Activated CD8-positive, alpha-beta T cell treated with anti-CD3 and anti-CD28 coated beads, Interleukin-2, amount 10 ng/mL, durations not matched to agents 7 days and 5 days (primary cell): ENCODE measurements at regions of chr5 and their contacts with region 1.

Region 1: GRCh38 chr5:141960449-141961202 is 2.6 kb upstream of the PCDH12 start:
- DNase-seq: peak; percentile 96
- ATAC-seq: peak; percentile 92
- H3K4me3 Mint-ChIP-seq: peak overlapping the region; percentile 40
- H3K27ac Mint-ChIP-seq: peak overlapping the region; percentile 86
- H3K4me1 Mint-ChIP-seq: peaks cover 58% of the 10 kb centered on the region
- H3K27me3 Mint-ChIP-seq: no peaks in the 10 kb centered on the region

Region 2: GRCh38 chr5:141664732-141665461 is 295.7 kb before region 1 on chr5:
- CTCF ChIA-PET with region 1: interaction called, 49 read pairs
- POLR2A ChIA-PET with region 1: no interaction called
- DNase-seq: peak; percentile 84
- ATAC-seq: peak; percentile 93
- H3K4me3 Mint-ChIP-seq: no peak overlapping the region
- H3K27ac Mint-ChIP-seq: peak overlapping the region; percentile 0
- H3K4me1 Mint-ChIP-seq: peaks cover 8% of the 10 kb centered on the region
- H3K27me3 Mint-ChIP-seq: no peaks in the 10 kb centered on the region

Region 3: GRCh38 chr5:141701360-141702119 is 259.1 kb before region 1 on chr5:
- CTCF ChIA-PET with region 1: interaction called, 224 read pairs
- POLR2A ChIA-PET with region 1: interaction called, 6 read pairs
- DNase-seq: no peak
- ATAC-seq: peak; percentile 25
- H3K4me3 Mint-ChIP-seq: peak overlapping the region; percentile 71
- H3K27ac Mint-ChIP-seq: no peak overlapping the region
- H3K4me1 Mint-ChIP-seq: peaks cover 17% of the 10 kb centered on the region
- H3K27me3 Mint-ChIP-seq: peaks cover 46% of the 10 kb centered on the region

Region 4: GRCh38 chr5:141780952-141781730 is 179.5 kb before region 1 on chr5:
- CTCF ChIA-PET with region 1: no interaction called
- POLR2A ChIA-PET with region 1: no interaction called
- DNase-seq: no peak
- ATAC-seq: no peak
- H3K4me3 Mint-ChIP-seq: no peak overlapping the region
- H3K27ac Mint-ChIP-seq: no peak overlapping the region
- H3K4me1 Mint-ChIP-seq: peaks cover 2% of the 10 kb centered on the region
- H3K27me3 Mint-ChIP-seq: peaks cover 2% of the 10 kb centered on the region

Region 5: DNA sequence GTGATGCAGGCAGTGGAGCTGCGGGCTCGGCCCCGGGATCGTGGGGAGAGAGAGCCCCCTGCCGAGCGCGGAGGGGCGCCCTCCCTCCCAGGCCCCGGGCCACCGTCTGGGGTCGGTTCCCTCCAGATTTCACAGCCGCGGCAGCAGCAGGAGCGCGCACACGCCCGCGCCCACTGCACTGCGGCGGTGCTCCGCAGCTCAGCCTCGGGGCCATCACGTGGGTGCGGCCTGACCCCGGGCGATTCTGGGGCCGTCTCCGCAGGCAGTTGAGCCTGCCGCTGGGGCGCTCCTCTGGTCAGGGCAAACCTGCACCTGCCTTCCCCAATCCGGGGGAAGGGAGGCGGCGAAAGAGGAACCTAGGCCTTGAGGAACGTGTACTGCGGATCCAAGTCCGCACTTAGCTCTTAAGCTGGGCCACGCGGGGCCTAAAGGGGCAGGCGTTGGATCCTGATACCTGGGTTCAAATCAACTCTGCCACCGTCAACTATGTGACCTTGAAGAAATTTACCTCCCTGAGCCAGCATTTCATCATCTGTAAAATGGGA is 46.4 kb before region 1 on chr5:
- CTCF ChIA-PET with region 1: interaction called, 59 read pairs
- POLR2A ChIA-PET with region 1: interaction called, 3 read pairs
- DNase-seq: no peak
- ATAC-seq: peak; percentile 88
- H3K4me3 Mint-ChIP-seq: peak overlapping the region; percentile 14
- H3K27ac Mint-ChIP-seq: no peak overlapping the region
- H3K4me1 Mint-ChIP-seq: peaks cover 8% of the 10 kb centered on the region
- H3K27me3 Mint-ChIP-seq: peaks cover 47% of the 10 kb centered on the region

Region 6: DNA sequence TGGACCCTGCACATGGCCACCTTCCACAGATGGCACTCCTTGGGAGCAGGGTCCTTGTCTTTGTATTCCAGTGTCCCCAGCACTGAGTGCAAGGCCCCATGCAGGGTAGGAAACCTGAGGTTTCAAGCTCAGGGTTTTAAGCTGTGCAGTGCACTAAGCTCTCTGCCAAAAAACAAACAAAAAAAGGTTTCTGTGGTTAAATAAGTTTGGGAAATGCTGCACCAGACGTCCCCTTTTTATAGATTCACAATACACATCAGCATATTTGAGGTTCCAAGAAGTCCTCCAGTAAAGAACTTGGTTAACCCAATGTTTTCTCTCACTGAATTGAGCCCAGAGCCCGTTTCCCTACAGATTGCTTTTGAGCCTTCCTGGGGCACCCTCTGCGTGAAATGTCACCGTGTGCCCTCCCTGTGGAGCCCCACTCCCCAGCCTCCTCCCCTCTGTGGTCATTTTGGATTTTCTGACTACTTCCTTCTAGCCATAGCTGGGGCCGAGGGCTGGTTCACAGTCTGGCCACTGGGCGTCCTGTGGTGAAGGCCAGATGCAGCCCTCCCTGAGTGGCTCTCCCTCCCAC is 19.8 kb before region 1 on chr5:
- CTCF ChIA-PET with region 1: interaction called, 49 read pairs
- POLR2A ChIA-PET with region 1: interaction called, 3 read pairs
- DNase-seq: no peak
- ATAC-seq: no peak
- H3K4me3 Mint-ChIP-seq: no peak overlapping the region
- H3K27ac Mint-ChIP-seq: peak overlapping the region; percentile 47
- H3K4me1 Mint-ChIP-seq: peaks cover 11% of the 10 kb centered on the region
- H3K27me3 Mint-ChIP-seq: no peaks in the 10 kb centered on the region

Region 7: DNA sequence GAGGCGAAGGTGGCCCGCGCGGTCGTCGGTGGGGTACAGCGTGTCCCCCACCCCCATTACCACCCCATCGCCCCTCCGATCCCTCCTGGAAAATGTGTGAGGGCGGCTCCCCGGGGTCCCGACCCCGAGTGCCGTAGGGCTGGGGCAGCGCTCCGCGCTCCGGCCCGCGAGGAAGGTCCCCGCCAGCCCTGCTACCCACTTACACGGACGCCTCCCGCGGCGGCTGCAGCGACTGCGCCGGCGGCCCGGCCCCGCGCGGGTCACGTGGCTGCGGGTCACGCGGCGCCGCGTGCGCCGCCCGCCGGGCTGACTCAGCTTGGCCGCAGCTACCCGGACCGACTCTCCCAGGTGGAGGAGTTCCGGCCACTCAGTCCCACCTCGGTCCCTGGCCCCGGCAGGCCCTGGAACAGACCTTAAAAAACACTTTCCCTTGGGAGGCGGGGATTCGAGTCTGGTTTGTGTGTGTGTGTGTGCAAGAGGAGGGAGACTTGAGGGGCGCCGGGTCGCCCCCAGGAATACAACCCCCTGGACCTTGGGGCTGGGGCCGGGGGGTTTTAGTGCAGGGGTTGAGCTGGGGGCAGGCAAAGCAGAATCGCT is 52.3 kb after region 1 on chr5 and contains the start of gene GNPDA1:
- CTCF ChIA-PET with region 1: interaction called, 19 read pairs
- POLR2A ChIA-PET with region 1: interaction called, 4 read pairs
- DNase-seq: peak; percentile 74
- ATAC-seq: peak; percentile 53
- H3K4me3 Mint-ChIP-seq: peak within 1 kb of the TSS; percentile 82
- H3K27ac Mint-ChIP-seq: peak within 1 kb of the TSS; percentile 93
- H3K4me1 Mint-ChIP-seq: peaks cover 85% of the 10 kb centered on the region
- H3K27me3 Mint-ChIP-seq: no peaks in the 10 kb centered on the region
- total RNA-seq, gene GNPDA1: 34.9 to 41.0 TPM

Region 8: DNA sequence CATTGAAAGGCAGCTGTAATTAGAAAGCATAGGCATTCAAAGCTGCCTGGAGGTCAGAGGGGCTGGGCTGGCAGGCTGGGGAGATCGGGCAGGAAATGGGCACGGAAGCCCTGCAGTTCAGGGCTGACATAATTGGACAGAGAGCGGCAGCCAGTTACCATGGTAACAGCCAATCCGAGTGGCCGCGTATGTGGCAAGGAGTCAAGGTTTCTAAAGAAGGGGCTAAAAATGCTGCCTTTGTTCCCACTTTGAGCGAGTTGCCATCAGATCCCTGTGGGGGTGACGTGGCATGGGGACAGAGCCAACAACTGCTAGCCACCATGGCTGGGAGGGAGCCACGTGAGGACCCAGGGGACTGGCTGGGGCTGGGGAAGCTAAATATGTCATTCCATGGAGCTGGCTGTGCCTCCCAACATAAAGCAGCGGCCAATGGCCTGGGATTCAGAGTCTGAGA is 103.3 kb after region 1 on chr5:
- CTCF ChIA-PET with region 1: no interaction called
- POLR2A ChIA-PET with region 1: no interaction called
- DNase-seq: peak; percentile 67
- ATAC-seq: peak; percentile 82
- H3K4me3 Mint-ChIP-seq: no peak overlapping the region
- H3K27ac Mint-ChIP-seq: peak overlapping the region; percentile 73
- H3K4me1 Mint-ChIP-seq: peaks cover 17% of the 10 kb centered on the region
- H3K27me3 Mint-ChIP-seq: peaks cover 3% of the 10 kb centered on the region

Region 9: DNA sequence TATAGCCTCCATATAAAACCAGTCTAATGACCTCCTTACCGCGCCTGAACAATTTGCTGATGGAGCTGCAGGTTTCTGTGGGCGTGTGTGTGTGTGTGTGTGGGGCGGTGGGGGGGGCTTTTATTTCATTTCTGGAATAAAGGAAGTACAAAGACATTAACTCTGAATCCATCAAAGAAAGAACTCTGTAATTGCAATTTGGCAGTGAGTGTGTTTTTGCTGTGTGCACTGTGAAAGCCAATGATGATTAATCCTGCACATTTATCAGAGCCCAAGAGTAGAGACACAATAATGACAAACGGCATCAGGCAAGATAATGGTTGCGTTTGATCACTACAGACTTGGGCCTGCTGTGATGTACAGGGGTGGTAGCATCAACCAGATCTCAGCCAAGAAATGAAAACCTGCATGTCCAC is 118.7 kb after region 1 on chr5:
- CTCF ChIA-PET with region 1: no interaction called
- POLR2A ChIA-PET with region 1: no interaction called
- DNase-seq: no peak
- ATAC-seq: no peak
- H3K4me3 Mint-ChIP-seq: no peak overlapping the region
- H3K27ac Mint-ChIP-seq: no peak overlapping the region
- H3K4me1 Mint-ChIP-seq: peaks cover 9% of the 10 kb centered on the region
- H3K27me3 Mint-ChIP-seq: no peaks in the 10 kb centered on the region

Region 10: GRCh38 chr5:142655339-142656267 is 695.0 kb after region 1 on chr5:
- CTCF ChIA-PET with region 1: no interaction called
- POLR2A ChIA-PET with region 1: no interaction called
- DNase-seq: peak; percentile 73
- ATAC-seq: peak; percentile 94
- H3K4me3 Mint-ChIP-seq: no peak overlapping the region
- H3K27ac Mint-ChIP-seq: no peak overlapping the region
- H3K4me1 Mint-ChIP-seq: no peaks in the 10 kb centered on the region
- H3K27me3 Mint-ChIP-seq: peaks cover 18% of the 10 kb centered on the region